Posterior cingulate gyrus (tissue), 11 donors: ENCODE measurements at regions of chr9 and their contacts with region 1.

Region 1: DNA sequence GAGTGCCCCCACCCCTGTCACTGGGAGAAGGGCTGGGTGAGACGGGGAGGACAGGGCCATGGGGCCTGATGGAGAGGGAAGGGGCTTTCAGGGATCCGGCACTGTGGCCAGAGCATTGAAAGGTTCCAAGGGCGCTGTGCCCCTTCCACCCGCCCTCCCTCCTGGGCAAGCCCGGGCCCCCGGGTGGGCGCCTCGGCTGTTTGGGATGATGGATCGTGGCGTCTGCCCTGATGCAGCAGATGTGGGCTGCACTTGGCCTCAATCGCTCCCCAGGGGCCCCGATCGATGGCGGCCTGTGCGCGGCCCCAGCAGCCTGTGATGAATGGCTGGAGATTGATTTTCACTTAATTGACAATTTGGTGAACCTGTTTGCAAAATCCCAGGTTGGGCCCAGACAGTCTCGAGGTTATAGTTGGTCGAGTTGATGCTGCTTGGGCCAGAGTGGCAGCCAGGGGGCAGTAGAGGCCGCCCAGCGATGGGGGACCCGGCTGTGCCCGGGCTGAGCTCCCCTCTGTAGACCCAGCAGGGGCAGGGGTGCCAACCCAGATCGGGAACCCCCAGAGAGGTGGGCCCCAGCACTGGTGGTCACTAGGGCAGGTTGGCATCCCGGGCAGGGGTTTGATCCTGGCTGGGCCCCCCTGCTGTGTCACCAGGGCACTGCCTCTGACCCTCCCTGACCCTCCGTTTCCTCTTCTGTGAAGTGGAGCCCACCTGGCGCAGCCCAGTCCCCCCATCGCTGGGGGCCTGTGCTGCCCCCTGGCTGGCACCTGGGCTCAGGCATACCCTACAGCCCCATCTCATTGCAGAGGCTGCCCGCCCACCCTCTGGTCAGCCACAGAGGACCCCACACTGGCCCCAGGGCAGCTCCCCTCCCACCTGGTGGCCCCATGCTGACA is 34.7 kb downstream of the LHX3 start:
- DNase-seq: peak in 5 of 10 donors; percentile 22 to 87 (median 37)

Region 2: DNA sequence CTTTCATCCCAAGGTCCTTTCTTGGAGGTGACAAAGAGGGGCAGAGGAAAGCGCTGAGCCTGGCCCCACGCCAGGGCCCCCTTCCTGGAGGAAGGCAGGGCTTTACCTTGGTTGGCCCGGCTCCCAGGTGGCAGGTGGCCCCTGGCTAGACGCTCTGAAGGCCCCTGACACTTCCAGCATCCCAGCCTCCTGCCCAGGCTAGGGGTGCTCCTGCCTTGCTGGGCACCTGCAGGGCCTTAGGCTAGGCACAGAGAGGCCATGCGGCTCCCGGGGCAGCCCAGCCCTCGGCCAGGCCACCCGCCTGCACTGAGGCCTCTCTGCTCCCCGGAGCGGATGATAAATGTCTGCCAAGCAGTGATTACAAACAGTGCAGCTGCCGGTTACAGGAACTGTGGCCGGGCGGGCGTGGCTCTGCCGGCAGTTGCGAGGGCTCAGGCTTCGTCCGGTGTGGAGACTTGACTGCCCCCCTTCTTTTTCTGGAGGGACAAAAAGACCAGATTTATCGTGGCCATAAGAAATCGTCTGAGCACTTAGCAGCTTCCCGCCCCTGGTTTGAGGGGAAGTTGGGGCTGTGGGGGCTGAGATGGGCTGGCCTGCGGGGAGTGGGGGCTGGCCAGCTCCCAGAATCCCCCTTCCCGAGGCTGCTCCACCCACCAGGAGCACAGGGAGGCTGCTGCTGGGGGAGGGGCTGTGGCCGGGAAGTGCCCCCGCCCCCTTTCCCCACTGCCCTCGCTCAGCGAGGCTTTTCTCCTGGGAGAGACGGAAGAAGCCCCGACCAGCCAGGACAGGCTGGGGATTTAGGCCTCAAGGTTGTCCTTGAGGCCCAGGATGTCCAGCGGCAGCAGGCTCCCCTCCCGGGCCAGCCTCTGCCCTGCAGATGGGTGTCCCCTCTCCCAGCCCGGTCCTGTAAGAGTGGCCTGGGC is 177.5 kb before region 1 on chr9:
- intact Hi-C with region 1: no loop called
- DNase-seq: peak in 3 of 10 donors; percentile 44 to 93 (median 50)

Region 3: DNA sequence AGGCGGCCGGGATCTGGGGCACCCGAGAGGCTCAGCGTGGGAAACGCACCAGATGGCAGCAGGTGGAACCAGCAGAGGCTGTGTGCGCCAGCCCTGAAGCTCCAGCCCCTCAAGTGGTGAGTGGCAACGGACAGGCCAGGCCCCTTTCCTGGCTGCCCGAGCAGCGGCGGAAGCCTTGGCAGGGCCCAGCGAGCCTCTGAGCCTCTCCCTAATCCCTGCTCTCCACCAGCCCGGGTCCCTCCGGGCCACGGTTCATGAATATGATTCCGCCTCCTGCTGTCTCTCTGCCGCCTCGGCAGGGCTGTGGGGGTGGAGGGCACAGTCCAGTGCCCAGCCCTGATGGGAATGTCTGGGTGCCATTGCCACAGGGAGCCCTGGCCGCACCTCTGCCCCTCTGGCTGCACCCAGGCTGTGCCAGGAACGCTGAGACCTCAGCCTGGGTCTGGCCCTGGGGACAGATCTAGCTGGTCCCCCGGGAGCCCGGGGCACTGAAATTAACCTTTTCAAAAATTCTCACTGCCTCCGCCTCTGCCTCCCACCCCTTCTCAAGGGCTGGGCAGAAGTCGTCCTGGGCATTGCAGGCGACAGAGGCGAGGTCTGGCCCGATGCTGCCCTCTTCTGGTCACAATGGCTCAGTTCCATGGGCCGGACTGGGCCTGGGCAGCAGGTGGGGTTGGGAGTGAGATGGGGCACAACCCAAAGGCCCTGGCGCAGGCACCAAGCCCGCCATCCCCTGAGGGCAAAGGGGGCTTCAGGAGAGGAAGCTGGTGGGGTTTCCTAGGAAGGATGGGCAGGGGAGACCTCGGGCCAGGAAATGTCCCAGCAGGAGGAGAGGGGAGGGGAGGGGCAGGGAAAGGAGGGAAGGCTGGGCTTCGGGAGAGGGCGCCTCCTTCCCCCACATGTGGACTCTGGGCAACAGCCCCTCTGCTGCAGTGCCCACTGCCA is 113.3 kb after region 1 on chr9:
- intact Hi-C with region 1: loop called (anchors 1 kb)
- DNase-seq: peak; percentile 59 to 97 (median 84)